Right lobe of liver (tissue), 6 donors: ENCODE measurements at regions of chr13 and their contacts with region 1.

Region 1: DNA sequence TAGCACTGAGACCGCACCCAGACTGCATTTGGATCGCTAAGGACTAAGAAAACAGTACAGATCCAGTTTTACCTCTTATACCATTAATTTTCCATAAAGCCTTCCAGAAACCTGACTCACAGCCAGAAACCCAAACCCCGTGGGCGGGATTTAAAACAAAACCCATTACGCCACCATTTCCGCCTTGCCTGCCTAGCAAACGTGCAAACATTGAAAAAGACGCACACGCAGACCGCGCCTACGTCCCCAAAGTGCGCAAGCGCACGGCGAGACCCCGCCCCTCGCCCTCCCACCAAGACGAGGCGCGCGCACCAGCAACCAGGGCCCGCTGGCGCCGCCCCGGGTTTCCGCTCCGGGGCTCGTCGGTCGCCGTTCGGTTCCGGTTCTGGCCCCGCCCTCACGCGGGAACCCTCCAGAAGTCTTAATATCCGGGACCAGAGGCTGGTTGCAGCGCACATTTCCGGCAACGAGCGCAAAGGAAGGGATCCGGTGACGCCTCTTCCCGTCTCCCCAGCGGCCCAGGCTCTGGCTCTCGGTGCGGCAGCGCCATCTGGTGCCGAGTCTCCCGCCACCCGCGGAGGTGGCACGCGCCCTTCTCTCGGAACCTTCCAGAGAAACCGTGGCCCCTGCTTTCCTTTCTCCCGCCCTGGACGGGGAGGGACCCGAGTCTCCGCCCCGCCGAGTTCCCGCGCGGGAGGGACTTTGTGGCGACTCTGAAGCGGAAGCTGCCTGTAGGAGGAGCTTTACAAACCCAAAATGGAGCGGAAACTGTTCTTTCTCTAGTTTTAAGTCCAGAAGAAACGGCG is 256.9 kb upstream of the STARD13 start:
- DNase-seq: peak; percentile 98 to 99 (median 99)
- ATAC-seq: peak; percentile 89 to 96 (median 92)
- H3K4me3 ChIP-seq: peak overlapping the region; percentile 31 to 53 (median 42)
- H3K27ac ChIP-seq: peak overlapping the region; percentile 96 to 98 (median 97)
- H3K4me1 ChIP-seq: peaks cover 0 to 19% (median 0%) of the 10 kb centered on the region in 4 donors
- H3K27me3 ChIP-seq: no peaks in the 10 kb centered on the region
- CTCF ChIP-seq: peak; percentile 92 to 96 (median 95)
- POLR2A ChIP-seq: peak; percentile 84

Region 2: GRCh38 chr13:33723772-33724435 is 181.4 kb after region 1 on chr13:
- intact Hi-C with region 1: loop called in 1 of 2 experiments (anchors 10 kb)
- DNase-seq: peak; percentile 65 to 80 (median 67)
- ATAC-seq: peak; percentile 93 to 99 (median 96)
- H3K4me3 ChIP-seq: no peak overlapping the region
- H3K27ac ChIP-seq: peak overlapping the region; percentile 24 to 54 (median 51)
- H3K4me1 ChIP-seq: peaks cover 0 to 26% (median 8%) of the 10 kb centered on the region in 4 donors
- H3K27me3 ChIP-seq: no peaks in the 10 kb centered on the region
- CTCF ChIP-seq: peak; percentile 74 to 84 (median 78)
- POLR2A ChIP-seq: no peak